ENCODE measurements at regions of chr4 and their contacts with region 1.

Region 1: GRCh38 chr4:110087070-110087708 is 111.2 kb downstream of the ELOVL6 start:
- DNase-seq: peak; percentile 83
- ATAC-seq: no peak
- H3K4me3 ChIP-seq: no peak overlapping the region
- H3K27ac ChIP-seq: no peak overlapping the region
- H3K4me1 ChIP-seq: peaks cover 5% of the 10 kb centered on the region; the same call in 1 of the 2 replicates
- H3K27me3 ChIP-seq: no peaks in the 10 kb centered on the region
- CTCF ChIP-seq: no peak
- POLR2A ChIP-seq: no peak
- RAD21 ChIP-seq: no peak

Region 2: DNA sequence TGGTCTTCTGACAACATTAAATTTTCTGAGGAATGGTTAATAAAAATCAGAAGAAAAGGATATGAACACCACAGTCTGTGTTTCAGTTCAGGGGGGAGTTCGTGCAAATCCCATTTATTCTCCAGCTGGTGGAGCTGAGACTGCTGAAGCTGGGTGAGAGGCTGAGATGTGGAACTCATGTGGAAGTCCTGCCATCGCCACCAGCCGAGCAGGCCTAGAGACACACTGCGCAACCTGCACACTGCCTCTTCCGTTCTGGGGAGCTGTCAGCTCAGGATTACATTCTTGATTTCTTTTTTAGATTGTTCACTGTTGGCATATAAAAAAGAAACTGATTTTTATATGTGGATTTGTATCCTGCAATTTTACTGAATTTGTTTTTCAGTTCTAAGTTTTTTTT is 177.8 kb after region 1 on chr4:
- CTCF ChIA-PET with region 1: no interaction called
- POLR2A ChIA-PET with region 1: interaction called, 10 read pairs
- dilution Hi-C with region 1: no loop called
- in situ Hi-C with region 1: no loop called
- intact Hi-C with region 1: no loop called
- DNase-seq: no peak
- ATAC-seq: no peak
- H3K4me3 ChIP-seq: no peak overlapping the region
- H3K27ac ChIP-seq: no peak overlapping the region
- H3K4me1 ChIP-seq: no peaks in the 10 kb centered on the region
- H3K27me3 ChIP-seq: peaks cover 3% of the 10 kb centered on the region
- CTCF ChIP-seq: no peak
- POLR2A ChIP-seq: no peak
- RAD21 ChIP-seq: no peak